Heart right ventricle (tissue), 16 donors: ENCODE measurements at regions of chr21 and their contacts with region 1.

Region 1: GRCh38 chr21:46048926-46049889 is 48.7 kb upstream of the COL6A2 start:
- DNase-seq: peak; percentile 84 to 91
- ATAC-seq: peak; percentile 85 to 97 (median 94)
- H3K4me3 ChIP-seq: no peak overlapping the region
- H3K27ac ChIP-seq: peak overlapping the region; percentile 48 to 87 (median 81)
- H3K4me1 ChIP-seq: peaks cover 0 to 30% (median 12%) of the 10 kb centered on the region in 9 donors
- H3K27me3 ChIP-seq: peaks cover 0 to under 1% (median 0%) of the 10 kb centered on the region in 7 donors
- CTCF ChIP-seq: no peak

Region 2: DNA sequence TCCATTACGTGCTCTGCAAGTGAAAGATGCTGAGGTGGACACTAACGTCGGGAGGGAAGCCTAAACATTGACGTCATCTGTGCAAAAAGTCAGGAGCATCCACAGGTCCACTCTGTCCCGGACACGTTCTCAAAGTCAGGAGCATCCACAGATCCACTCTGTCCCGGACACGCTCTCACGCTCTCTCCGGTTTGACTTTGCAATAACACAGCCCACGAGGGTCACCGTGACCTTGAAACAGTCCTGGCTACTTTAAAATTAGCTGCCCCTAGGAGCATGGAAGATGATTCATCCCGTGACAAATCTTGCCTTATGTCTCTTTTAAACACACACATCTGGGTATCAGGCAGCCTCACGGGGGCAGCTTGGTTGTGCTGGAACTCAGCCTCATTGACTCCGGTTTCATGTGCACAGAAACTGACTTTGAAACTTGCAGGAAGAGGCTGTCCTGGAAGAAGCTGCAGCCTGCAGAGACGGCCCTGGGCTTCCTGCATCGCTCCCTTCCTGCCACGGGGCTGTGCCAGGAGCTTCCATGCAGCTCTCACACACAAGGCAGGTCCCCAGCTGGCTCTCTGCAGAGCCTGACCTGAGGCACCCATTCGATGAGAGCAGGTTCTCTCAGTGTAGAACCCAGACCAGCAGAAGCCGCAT is 662.4 kb before region 1 on chr21:
- intact Hi-C with region 1: no loop called
- DNase-seq: peak; percentile 51 to 54
- ATAC-seq: peak; percentile 41 to 68 (median 64)
- H3K4me3 ChIP-seq: peak overlapping the region in 1 of 10 donors; percentile 8
- H3K27ac ChIP-seq: peak overlapping the region in 7 of 10 donors; percentile 1 to 66 (median 44)
- H3K4me1 ChIP-seq: peaks cover 9 to 25% (median 17%) of the 10 kb centered on the region in 9 donors
- H3K27me3 ChIP-seq: peaks cover 0 to 9% (median 0%) of the 10 kb centered on the region in 7 donors
- CTCF ChIP-seq: peak in 7 of 9 donors; percentile 30 to 59 (median 49)

Region 3: DNA sequence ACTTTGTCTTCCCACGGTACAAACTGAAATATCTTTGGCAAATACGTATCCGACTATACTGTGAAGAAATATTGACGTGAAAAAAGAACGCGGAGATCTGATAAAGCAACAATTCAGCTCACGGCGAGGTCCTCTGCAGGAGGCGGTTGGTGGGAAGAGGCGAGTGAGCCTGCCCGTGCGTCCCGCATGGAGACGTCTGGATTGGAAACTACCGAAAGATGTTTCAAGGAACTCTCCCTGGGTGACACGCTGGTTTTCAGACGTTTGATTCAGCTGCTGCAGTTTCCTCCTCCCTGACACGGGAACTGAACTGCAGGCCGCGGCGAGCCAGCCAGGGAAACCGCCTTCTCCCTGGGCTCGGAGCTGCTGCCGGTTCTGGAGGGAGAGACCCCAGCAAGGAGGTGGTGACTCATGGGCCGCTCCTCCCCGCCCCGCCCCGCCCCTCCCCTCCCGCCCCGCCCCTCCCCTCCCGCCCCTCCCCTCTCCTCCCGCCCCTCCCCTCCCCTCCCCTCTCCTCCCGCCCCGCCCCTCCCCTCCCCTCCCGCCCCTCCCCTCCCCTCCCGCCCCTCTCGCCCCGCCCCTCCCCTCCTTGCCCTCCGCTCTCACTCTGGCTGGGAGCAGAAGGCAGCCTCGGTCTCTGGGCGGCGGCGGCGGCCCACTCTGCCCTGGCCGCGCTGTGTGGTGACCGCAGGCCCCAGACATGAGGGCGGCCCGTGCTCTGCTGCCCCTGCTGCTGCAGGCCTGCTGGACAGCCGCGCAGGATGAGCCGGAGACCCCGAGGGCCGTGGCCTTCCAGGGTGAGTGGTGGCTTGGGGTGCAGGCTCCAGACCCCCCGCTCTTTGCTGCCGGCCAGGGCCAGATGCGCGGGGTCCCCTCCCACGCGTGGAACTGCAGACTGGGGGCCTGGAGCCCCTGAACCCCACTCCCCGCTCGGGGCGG is 67.8 kb before region 1 on chr21 and contains the start of gene COL6A1:
- intact Hi-C with region 1: loop called in 1 of 10 experiments (anchors 10 kb)
- DNase-seq: peak; percentile 85
- ATAC-seq: peak; percentile 72 to 85 (median 77)
- H3K4me3 ChIP-seq: peak within 1 kb of the TSS; percentile 51 to 100 (median 96)
- H3K27ac ChIP-seq: peak within 1 kb of the TSS; percentile 64 to 92 (median 90)
- H3K4me1 ChIP-seq: peaks cover 0 to 65% (median 19%) of the 10 kb centered on the region in 9 donors
- H3K27me3 ChIP-seq: peaks cover 0 to 22% (median 0%) of the 10 kb centered on the region in 7 donors
- CTCF ChIP-seq: no peak
- total RNA-seq, gene COL6A1: 71.9 to 260 (median 100) TPM

Region 4: GRCh38 chr21:46001821-46002681 is 47.2 kb before region 1 on chr21:
- intact Hi-C with region 1: loop called in 1 of 10 experiments (anchors 2 kb)
- DNase-seq: peak; percentile 6 to 15
- ATAC-seq: peak in 1 of 8 donors; percentile 5
- H3K4me3 ChIP-seq: no peak overlapping the region
- H3K27ac ChIP-seq: no peak overlapping the region
- H3K4me1 ChIP-seq: no peaks in the 10 kb centered on the region
- H3K27me3 ChIP-seq: no peaks in the 10 kb centered on the region
- CTCF ChIP-seq: no peak

Region 5: GRCh38 chr21:46097336-46098293 is 48.4 kb after region 1 on chr21 and contains the start of gene COL6A2:
- intact Hi-C with region 1: loop called in 1 of 10 experiments (anchors 10 kb)
- DNase-seq: peak; percentile 64 to 77
- ATAC-seq: peak; percentile 77 to 94 (median 90)
- H3K4me3 ChIP-seq: peak within 1 kb of the TSS; percentile 64 to 90 (median 82)
- H3K27ac ChIP-seq: peak within 1 kb of the TSS; percentile 79 to 97 (median 93)
- H3K4me1 ChIP-seq: peaks cover 4 to 49% (median 16%) of the 10 kb centered on the region in 9 donors
- H3K27me3 ChIP-seq: peaks cover 0 to 54% (median 0%) of the 10 kb centered on the region in 7 donors
- CTCF ChIP-seq: peak in 8 of 9 donors; percentile 22 to 68 (median 48)
- total RNA-seq, gene COL6A2: 76.6 to 370 (median 119) TPM

Region 6: DNA sequence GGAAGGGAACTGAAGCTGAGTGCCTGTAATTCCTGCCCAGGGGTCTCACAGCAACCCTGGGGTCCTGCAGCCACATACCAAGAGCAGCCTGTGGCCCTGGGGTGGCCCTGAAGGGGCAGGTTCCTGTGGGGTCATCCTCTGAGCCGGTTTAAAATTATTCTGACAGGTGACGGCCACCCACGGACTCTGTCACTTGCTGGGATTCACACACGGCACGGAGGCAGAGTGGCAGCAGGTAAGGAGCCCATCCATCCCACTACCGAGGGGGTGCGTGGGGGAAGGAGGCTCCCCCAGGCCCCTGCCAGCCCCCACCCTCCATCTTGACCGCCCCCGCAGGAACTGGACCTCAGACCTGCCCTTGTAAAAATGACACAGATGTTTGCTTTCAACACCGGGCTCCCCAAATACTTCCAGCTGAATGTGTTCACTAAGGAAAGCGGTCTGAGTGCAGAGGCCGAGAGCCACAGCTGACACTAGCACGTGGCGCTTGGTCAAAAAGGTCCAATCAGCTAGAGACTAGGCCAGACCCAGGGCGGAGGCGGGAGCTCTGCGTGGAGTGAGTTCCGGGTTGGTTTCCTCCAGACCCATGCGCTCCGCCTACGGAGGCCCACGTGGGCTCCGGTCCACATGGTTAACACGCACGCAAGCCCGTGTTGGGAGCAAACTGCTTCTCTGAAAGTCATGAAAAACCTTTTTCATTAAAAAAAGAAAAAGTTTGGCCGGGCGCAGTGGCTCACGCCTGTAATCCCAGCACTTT is 247.0 kb after region 1 on chr21:
- intact Hi-C with region 1: no loop called
- DNase-seq: peak; percentile 88 to 92
- ATAC-seq: peak; percentile 82 to 97 (median 92)
- H3K4me3 ChIP-seq: peak overlapping the region in 7 of 10 donors; percentile 7 to 73 (median 52)
- H3K27ac ChIP-seq: peak overlapping the region; percentile 35 to 87 (median 78)
- H3K4me1 ChIP-seq: peaks cover 9 to 37% (median 31%) of the 10 kb centered on the region in 9 donors
- H3K27me3 ChIP-seq: peaks cover 0 to 13% (median 0%) of the 10 kb centered on the region in 7 donors
- CTCF ChIP-seq: no peak